HCT116 (cell line): ENCODE measurements at regions of chr14 and their contacts with region 1.

Region 1: GRCh38 chr14:58637391-58638230 is at the start of gene DACT1:
- DNase-seq: no peak
- ATAC-seq: peak; percentile 73
- H3K4me3 ChIP-seq: peak within 1 kb of the TSS; percentile 50 to 61
- H3K27ac ChIP-seq: peak within 1 kb of the TSS; percentile 38; the same call in 1 of the 2 replicates
- H3K4me1 ChIP-seq: peaks cover 7 to 43% of the 10 kb centered on the region in 2 experiments; a peak in 3 of 4 replicates
- H3K27me3 ChIP-seq: peaks cover 3% of the 10 kb centered on the region; the same call in 1 of the 2 replicates
- CTCF ChIP-seq: no peak
- POLR2A ChIP-seq: no peak
- RAD21 ChIP-seq: no peak
- total RNA-seq, gene DACT1: 1.6 TPM

Region 2: GRCh38 chr14:58107947-58108552 is 529.6 kb before region 1 on chr14:
- CTCF ChIA-PET with region 1: interaction called, 3 read pairs
- POLR2A ChIA-PET with region 1: no interaction called
- RAD21 ChIA-PET with region 1: no interaction called
- intact Hi-C with region 1: loop called (anchors 2 kb)
- DNase-seq: peak; percentile 52
- ATAC-seq: peak; percentile 76
- H3K4me3 ChIP-seq: no peak overlapping the region
- H3K27ac ChIP-seq: no peak overlapping the region
- H3K4me1 ChIP-seq: no peaks in the 10 kb centered on the region
- H3K27me3 ChIP-seq: 0 out of 2 replicates have a peak, but pooled peaks cover 12% of the 10 kb centered on the region
- CTCF ChIP-seq: peak; percentile 71 to 79 (median 76)
- POLR2A ChIP-seq: no peak
- RAD21 ChIP-seq: peak; percentile 84

Region 3: GRCh38 chr14:59020382-59020781 is 382.8 kb after region 1 on chr14:
- CTCF ChIA-PET with region 1: interaction called, 25 read pairs
- POLR2A ChIA-PET with region 1: no interaction called
- RAD21 ChIA-PET with region 1: no interaction called
- intact Hi-C with region 1: loop called (anchors 2 kb)
- DNase-seq: peak; percentile 18
- ATAC-seq: peak; percentile 87
- H3K4me3 ChIP-seq: no peak overlapping the region
- H3K27ac ChIP-seq: no peak overlapping the region
- H3K4me1 ChIP-seq: no peaks in the 10 kb centered on the region
- H3K27me3 ChIP-seq: no peaks in the 10 kb centered on the region
- CTCF ChIP-seq: peak; percentile 16 to 61 (median 54); a peak in 3 of 6 replicates
- POLR2A ChIP-seq: no peak
- RAD21 ChIP-seq: peak; percentile 46

Region 4: GRCh38 chr14:59028476-59029202 is 391.0 kb after region 1 on chr14:
- CTCF ChIA-PET with region 1: interaction called, 4 read pairs
- POLR2A ChIA-PET with region 1: no interaction called
- RAD21 ChIA-PET with region 1: no interaction called
- intact Hi-C with region 1: loop called (anchors 2 kb)
- DNase-seq: peak; percentile 68
- ATAC-seq: peak; percentile 98
- H3K4me3 ChIP-seq: peak overlapping the region in 1 of 2 experiments; percentile 14; a peak in 1 of 4 replicates
- H3K27ac ChIP-seq: no peak overlapping the region
- H3K4me1 ChIP-seq: peaks cover 0 to 9% of the 10 kb centered on the region in 2 experiments; a peak in 2 of 4 replicates
- H3K27me3 ChIP-seq: no peaks in the 10 kb centered on the region
- CTCF ChIP-seq: peak; percentile 80 to 93 (median 90)
- POLR2A ChIP-seq: no peak
- RAD21 ChIP-seq: peak; percentile 91

Region 5: DNA sequence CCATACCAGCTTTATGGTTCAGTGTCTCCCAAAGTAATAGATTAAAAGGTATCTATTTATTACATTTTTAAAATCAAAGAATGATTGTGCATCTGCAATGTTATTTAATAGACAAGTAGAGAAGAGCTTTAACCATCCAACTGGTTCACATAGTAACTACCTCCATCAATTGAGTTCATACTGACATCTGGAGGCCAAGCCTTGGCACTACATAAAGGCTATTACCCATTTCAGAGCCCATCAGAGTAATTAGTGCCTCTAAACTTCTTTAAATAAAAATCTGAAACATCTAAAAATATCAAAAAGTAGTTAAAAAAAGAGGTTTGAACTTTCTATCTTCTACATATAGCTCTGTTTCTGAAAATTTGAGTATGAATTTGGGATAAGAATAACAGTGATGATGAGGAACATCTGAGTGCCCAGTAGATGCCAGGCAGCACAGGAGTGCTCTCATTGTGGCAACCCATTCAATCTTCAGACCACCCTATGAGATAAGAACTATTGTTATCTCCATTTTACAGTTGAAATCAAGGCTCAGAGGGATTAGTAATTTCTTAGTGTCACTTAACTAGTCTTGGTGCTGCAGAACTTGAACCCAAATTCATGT is 417.9 kb after region 1 on chr14:
- CTCF ChIA-PET with region 1: interaction called, 4 read pairs
- POLR2A ChIA-PET with region 1: no interaction called
- RAD21 ChIA-PET with region 1: no interaction called
- intact Hi-C with region 1: loop called (anchors 2 kb)
- DNase-seq: peak; percentile 13
- ATAC-seq: peak; percentile 95
- H3K4me3 ChIP-seq: no peak overlapping the region
- H3K27ac ChIP-seq: no peak overlapping the region
- H3K4me1 ChIP-seq: no peaks in the 10 kb centered on the region
- H3K27me3 ChIP-seq: no peaks in the 10 kb centered on the region
- CTCF ChIP-seq: peak; percentile 49 to 76 (median 69); a peak in 5 of 6 replicates
- POLR2A ChIP-seq: no peak
- RAD21 ChIP-seq: peak; percentile 77

Region 6: GRCh38 chr14:59126710-59127432 is 489.3 kb after region 1 on chr14:
- CTCF ChIA-PET with region 1: interaction called, 4 read pairs
- POLR2A ChIA-PET with region 1: no interaction called
- RAD21 ChIA-PET with region 1: no interaction called
- intact Hi-C with region 1: loop called (anchors 5 kb)
- DNase-seq: peak; percentile 61
- ATAC-seq: peak; percentile 97
- H3K4me3 ChIP-seq: no peak overlapping the region
- H3K27ac ChIP-seq: no peak overlapping the region
- H3K4me1 ChIP-seq: no peaks in the 10 kb centered on the region
- H3K27me3 ChIP-seq: no peaks in the 10 kb centered on the region
- CTCF ChIP-seq: peak; percentile 61 to 86 (median 86)
- POLR2A ChIP-seq: no peak
- RAD21 ChIP-seq: peak; percentile 93